Naive thymus-derived CD4-positive, alpha-beta T cell (primary cell): ENCODE measurements at regions of chr2 and their contacts with region 1.

Region 1: GRCh38 chr2:74281141-74281975 is 61.9 kb downstream of the SLC4A5 start:
- DNase-seq: no peak
- ATAC-seq: no peak
- H3K4me3 ChIP-seq: no peak overlapping the region
- H3K4me3 Mint-ChIP-seq: no peak overlapping the region
- H3K27ac ChIP-seq: no peak overlapping the region
- H3K27ac Mint-ChIP-seq: peak overlapping the region in 1 of 9 donors; percentile 22
- H3K4me1 ChIP-seq: no peaks in the 10 kb centered on the region
- H3K4me1 Mint-ChIP-seq: peaks cover 0 to 4% (median 0%) of the 10 kb centered on the region in 7 donors
- H3K27me3 ChIP-seq: no peaks in the 10 kb centered on the region
- H3K27me3 Mint-ChIP-seq: peaks cover 0 to 26% (median 0%) of the 10 kb centered on the region in 5 donors

Region 2: DNA sequence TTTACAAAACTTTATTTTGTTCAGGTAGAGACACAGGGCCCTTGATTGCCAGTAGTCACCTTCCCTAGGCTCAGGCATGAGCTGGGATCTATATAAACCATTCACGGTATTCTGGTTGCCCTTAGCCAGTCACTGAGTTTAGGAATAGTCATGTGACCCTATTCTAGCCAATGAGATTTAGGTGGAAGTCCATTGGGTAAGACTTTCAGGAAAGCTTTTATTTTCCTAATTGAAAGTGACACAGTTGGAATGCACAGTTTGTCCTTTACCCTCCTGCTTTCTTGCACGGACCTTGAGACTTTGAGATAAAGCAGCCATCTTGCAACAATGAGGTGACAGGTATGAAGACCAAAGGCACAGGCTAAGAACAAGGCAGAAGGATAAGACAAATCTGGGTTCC is 40.4 kb after region 1 on chr2:
- CTCF ChIA-PET with region 1: no interaction called
- POLR2A ChIA-PET with region 1: no interaction called
- intact Hi-C with region 1: loop called in 1 of 2 experiments (anchors 5 kb)
- DNase-seq: no peak
- ATAC-seq: no peak
- H3K4me3 ChIP-seq: no peak overlapping the region
- H3K4me3 Mint-ChIP-seq: no peak overlapping the region
- H3K27ac ChIP-seq: no peak overlapping the region
- H3K27ac Mint-ChIP-seq: no peak overlapping the region
- H3K4me1 ChIP-seq: no peaks in the 10 kb centered on the region
- H3K4me1 Mint-ChIP-seq: peaks cover 0 to 4% (median 0%) of the 10 kb centered on the region in 7 donors
- H3K27me3 ChIP-seq: no peaks in the 10 kb centered on the region
- H3K27me3 Mint-ChIP-seq: peaks cover 0 to 7% (median 0%) of the 10 kb centered on the region in 5 donors

Region 3: DNA sequence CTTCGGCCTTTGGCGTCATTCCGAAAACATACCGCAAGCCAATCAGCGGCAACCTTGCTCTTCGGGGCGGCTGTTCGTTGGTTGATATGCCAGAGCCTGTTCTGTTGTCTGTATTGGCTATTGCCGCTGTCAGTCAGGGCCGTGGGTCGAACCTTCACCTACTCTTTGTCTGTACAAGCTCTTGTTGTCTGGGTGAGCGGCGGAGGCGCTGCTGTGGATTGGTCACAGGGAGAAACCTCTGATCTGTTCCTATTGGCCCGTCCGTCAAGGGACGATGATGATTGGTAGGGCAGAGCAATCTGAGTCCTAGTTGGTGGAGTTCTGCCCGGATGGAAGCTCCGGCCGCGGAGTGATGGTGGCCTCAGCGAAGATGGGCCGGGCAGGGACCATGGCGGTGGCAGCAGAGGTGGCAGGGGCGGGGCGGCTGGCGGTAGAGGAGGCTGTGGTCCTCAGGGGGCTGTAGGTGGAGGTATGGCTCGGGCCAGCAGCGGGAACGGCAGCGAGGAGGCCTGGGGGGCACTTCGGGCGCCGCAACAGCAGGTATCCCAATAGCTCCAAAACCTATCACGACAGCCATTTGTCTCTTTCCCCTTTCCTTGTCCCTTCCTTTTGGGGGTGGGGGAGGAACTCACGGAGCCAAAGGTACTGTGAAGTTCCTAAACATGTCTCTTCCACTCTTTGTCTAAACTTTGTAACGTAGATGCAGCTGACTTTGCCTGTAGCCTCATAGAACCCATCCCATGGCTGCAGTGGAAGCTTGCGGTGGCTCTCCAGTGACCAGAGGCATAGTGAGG is 177.0 kb after region 1 on chr2 and contains the start of gene WBP1:
- CTCF ChIA-PET with region 1: no interaction called
- POLR2A ChIA-PET with region 1: no interaction called
- intact Hi-C with region 1: no loop called
- DNase-seq: peak in 8 of 9 donors; percentile 85 to 100 (median 100)
- ATAC-seq: peak; percentile 89
- H3K4me3 ChIP-seq: peak within 1 kb of the TSS; percentile 70
- H3K4me3 Mint-ChIP-seq: peak within 1 kb of the TSS; percentile 87 to 99 (median 96)
- H3K27ac ChIP-seq: peak within 1 kb of the TSS; percentile 100
- H3K27ac Mint-ChIP-seq: peak within 1 kb of the TSS; percentile 88 to 100 (median 99)
- H3K4me1 ChIP-seq: peaks cover 30 to 34% of the 10 kb centered on the region in 2 donors
- H3K4me1 Mint-ChIP-seq: peaks cover 38 to 68% (median 58%) of the 10 kb centered on the region in 7 donors
- H3K27me3 ChIP-seq: no peaks in the 10 kb centered on the region
- H3K27me3 Mint-ChIP-seq: peaks cover 0 to 2% (median 0%) of the 10 kb centered on the region in 5 donors
- total RNA-seq, gene WBP1: 53.6 to 127 (median 85.4) TPM